Activated CD4-positive, alpha-beta T cell treated with anti-CD3 and anti-CD28 coated beads for 36 hours (primary cell): ENCODE measurements at regions of chr3 and their contacts with region 1.

Region 1: DNA sequence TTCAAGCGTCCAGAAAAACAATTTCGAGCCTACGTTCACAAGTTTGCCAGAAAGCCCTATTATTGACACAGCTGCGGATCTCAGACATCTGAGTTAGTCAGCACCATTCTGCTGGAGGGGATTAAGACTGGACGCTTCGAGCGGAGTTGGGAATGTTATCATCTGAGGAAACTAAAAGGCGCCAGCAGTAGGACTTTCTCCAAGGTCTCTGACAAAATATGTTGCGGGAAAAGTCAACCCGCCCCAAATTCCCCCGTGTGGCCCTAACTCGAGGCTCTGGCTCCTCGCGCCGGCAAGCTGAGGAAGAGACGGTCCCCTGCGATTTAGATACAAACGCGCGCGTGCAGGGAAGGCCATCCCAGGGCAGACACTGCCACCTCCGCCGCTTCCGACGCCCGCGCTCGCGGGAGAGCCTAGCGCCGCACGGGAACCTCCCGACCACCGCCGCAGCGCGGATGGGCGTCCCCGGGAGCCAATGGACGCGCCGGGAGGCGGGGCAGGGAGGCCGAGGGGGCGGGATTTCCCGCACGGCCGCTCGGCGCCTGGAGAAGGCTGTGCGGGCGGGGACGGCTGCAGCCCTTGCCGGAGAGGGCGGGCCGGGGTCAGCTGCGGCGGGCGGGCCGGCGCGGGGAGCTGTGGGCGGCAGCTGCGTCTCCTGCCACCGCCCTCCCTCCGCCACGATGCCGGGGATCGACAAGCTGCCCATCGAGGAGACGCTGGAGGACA is at the start of gene APPL1:
- DNase-seq: peak; percentile 94
- ATAC-seq: peak; percentile 92
- H3K4me3 Mint-ChIP-seq: peak within 1 kb of the TSS; percentile 88
- H3K27ac Mint-ChIP-seq: peak within 1 kb of the TSS; percentile 78
- H3K4me1 Mint-ChIP-seq: peaks cover 29% of the 10 kb centered on the region
- H3K27me3 Mint-ChIP-seq: no peaks in the 10 kb centered on the region
- total RNA-seq, gene APPL1: 38.4 to 39.4 TPM

Region 2: GRCh38 chr3:56556908-56557830 is 670.2 kb before region 1 on chr3 and contains the start of gene CCDC66:
- CTCF ChIA-PET with region 1: no interaction called
- POLR2A ChIA-PET with region 1: no interaction called
- intact Hi-C with region 1: loop called in 1 of 2 experiments (anchors 2 kb)
- DNase-seq: peak; percentile 97
- ATAC-seq: peak; percentile 97
- H3K4me3 Mint-ChIP-seq: peak within 1 kb of the TSS; percentile 93
- H3K27ac Mint-ChIP-seq: peak within 1 kb of the TSS; percentile 99
- H3K4me1 Mint-ChIP-seq: peaks cover 20% of the 10 kb centered on the region
- H3K27me3 Mint-ChIP-seq: no peaks in the 10 kb centered on the region
- total RNA-seq, gene CCDC66: 23.5 to 28.5 TPM

Region 3: GRCh38 chr3:56693750-56694149 is 533.6 kb before region 1 on chr3:
- CTCF ChIA-PET with region 1: no interaction called
- POLR2A ChIA-PET with region 1: no interaction called
- intact Hi-C with region 1: loop called in 1 of 2 experiments (anchors 5 kb)
- DNase-seq: no peak
- ATAC-seq: no peak
- H3K4me3 Mint-ChIP-seq: no peak overlapping the region
- H3K27ac Mint-ChIP-seq: peak overlapping the region; percentile 40
- H3K4me1 Mint-ChIP-seq: peaks cover 41% of the 10 kb centered on the region
- H3K27me3 Mint-ChIP-seq: no peaks in the 10 kb centered on the region

Region 4: GRCh38 chr3:57130571-57131209 is 96.7 kb before region 1 on chr3:
- CTCF ChIA-PET with region 1: no interaction called
- POLR2A ChIA-PET with region 1: no interaction called
- intact Hi-C with region 1: no loop called
- DNase-seq: no peak
- ATAC-seq: no peak
- H3K4me3 Mint-ChIP-seq: no peak overlapping the region
- H3K27ac Mint-ChIP-seq: no peak overlapping the region
- H3K4me1 Mint-ChIP-seq: peaks cover 4% of the 10 kb centered on the region
- H3K27me3 Mint-ChIP-seq: no peaks in the 10 kb centered on the region

Region 5: GRCh38 chr3:57169872-57170623 is 57.3 kb before region 1 on chr3:
- CTCF ChIA-PET with region 1: interaction called, 6 read pairs
- POLR2A ChIA-PET with region 1: no interaction called
- intact Hi-C with region 1: loop called in 1 of 2 experiments (anchors 1 kb)
- DNase-seq: peak; percentile 85
- ATAC-seq: peak; percentile 86
- H3K4me3 Mint-ChIP-seq: peak overlapping the region; percentile 55
- H3K27ac Mint-ChIP-seq: no peak overlapping the region
- H3K4me1 Mint-ChIP-seq: peaks cover 4% of the 10 kb centered on the region
- H3K27me3 Mint-ChIP-seq: peaks cover 42% of the 10 kb centered on the region

Region 6: DNA sequence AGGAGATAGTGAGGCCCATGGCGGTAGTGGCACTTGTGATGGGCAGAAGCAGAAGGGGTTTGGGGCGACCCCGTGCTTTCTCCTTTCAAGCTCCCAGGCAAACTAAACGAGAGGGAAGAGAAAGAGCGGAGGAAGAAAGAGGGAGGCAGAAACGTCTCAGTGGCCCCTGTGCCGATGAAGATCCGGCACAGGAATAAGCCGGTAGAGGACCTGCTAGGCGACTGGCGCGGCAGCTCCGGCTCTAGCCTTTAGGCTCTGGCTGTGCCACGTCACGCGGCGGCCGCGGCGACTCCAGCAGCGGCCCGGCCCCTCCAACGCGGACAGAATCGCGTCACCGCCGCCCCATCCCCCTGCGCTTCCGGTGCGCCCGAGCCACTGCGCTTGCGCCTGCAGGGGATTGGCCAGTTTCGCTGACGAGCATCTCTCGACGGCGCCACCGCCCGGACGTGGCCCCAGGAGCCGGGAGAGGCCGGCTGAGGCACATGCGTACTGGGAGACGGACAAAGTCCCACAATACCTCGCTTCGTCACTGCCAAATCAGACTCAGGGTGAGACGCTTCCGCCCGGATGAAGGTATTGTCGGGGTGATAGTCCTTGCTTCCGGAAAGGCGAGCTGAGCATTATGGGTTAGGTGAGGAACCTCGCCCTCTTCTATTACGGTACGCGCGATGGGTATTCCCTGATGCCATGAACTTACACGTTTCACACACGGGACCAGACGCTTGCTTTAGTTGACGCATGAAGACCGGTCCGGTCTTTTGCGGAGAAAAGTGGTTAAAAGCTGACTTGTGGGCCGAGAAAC is 370.0 kb after region 1 on chr3 and contains the start of gene ARF4:
- CTCF ChIA-PET with region 1: no interaction called
- POLR2A ChIA-PET with region 1: no interaction called
- intact Hi-C with region 1: loop called (anchors 1 to 5 kb)
- DNase-seq: peak; percentile 99
- ATAC-seq: peak; percentile 94
- H3K4me3 Mint-ChIP-seq: peak within 1 kb of the TSS; percentile 98
- H3K27ac Mint-ChIP-seq: peak within 1 kb of the TSS; percentile 99
- H3K4me1 Mint-ChIP-seq: peaks cover 30% of the 10 kb centered on the region
- H3K27me3 Mint-ChIP-seq: no peaks in the 10 kb centered on the region
- total RNA-seq, gene ARF4: 49.6 to 50.0 TPM

Region 7: DNA sequence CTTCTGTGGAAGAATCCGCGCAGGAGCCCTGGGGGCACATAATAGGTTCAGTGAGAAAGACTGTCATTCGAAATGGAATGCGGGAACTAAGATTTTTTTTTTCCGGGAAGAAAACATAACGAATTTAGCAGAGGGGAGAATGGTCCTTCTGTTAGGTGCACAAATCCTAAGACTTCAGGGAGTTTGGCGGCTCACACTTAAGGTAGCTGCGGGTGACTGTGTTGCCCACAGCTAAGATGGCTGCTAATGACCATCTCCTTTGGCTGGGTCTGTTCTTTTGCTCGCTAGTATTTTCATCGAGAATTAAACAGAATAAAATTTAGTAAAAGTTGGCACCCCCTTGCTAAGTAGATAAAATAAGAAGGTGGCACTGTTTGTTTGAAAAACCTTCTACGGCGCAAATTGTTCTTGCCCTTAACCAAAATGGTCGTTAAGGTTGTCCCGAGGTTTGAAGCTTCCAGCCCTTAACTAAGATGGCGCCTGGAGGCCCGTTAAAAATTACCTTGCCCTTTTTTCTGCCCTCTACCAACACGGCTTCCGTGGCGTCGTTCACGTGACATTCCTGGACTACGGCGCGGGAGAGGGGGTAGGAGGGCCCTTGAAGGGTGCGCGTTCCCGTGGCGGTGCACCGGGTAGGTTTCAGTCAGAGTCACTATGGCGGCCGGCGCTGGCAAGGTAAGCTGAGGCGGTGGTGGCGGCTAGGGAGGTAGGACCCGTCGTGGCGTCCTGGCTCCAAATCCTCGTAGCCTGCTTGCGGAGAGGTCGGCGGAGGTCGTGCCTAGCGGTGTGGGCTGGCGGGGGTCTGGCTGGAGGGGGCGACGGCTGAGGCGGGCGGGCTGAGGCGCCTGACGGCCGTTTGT is 528.5 kb after region 1 on chr3 and contains the start of gene SLMAP:
- CTCF ChIA-PET with region 1: no interaction called
- POLR2A ChIA-PET with region 1: no interaction called
- intact Hi-C with region 1: loop called in 1 of 2 experiments (anchors 1 kb)
- DNase-seq: peak; percentile 98
- ATAC-seq: peak; percentile 95
- H3K4me3 Mint-ChIP-seq: peak within 1 kb of the TSS; percentile 97
- H3K27ac Mint-ChIP-seq: peak within 1 kb of the TSS; percentile 97
- H3K4me1 Mint-ChIP-seq: peaks cover 43% of the 10 kb centered on the region
- H3K27me3 Mint-ChIP-seq: no peaks in the 10 kb centered on the region
- total RNA-seq, gene SLMAP: 43.1 to 55.3 TPM